ENCODE measurements at regions of chr2 and their contacts with region 1.

Region 1: GRCh38 chr2:105671156-105671555 is 73.6 kb upstream of the NCK2 start:
- DNase-seq: no peak
- H3K4me3 ChIP-seq: no peak overlapping the region
- H3K27ac ChIP-seq: no peak overlapping the region
- H3K4me1 ChIP-seq: no peaks in the 10 kb centered on the region
- H3K27me3 ChIP-seq: no peaks in the 10 kb centered on the region
- CTCF ChIP-seq: no peak
- EP300 ChIP-seq: no peak
- POLR2A ChIP-seq: no peak

Region 2: DNA sequence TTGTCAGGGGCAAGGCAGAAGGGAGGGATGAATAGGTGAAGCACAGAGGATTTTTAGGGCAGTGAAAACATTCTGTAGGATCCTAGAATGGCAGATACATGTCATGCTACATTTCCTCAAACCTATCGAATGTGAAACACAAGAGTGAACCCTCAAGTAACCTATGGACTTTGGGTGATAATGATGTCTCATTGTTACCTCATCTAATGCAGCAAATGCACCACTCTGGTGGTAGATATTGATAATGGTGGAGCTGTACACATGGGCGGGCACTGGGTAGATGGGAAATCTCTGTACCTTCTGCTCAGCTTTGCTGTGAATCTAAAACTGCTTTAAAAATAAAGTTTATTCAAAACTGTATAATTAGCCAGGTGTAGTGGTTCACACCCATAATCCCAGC is 21.6 kb before region 1 on chr2:
- in situ Hi-C with region 1: no loop called
- intact Hi-C with region 1: loop called (anchors 1 kb)
- DNase-seq: no peak
- H3K4me3 ChIP-seq: no peak overlapping the region
- H3K27ac ChIP-seq: no peak overlapping the region
- H3K4me1 ChIP-seq: peaks cover 0 to 11% (median 5%) of the 10 kb centered on the region in 4 donors
- H3K27me3 ChIP-seq: no peaks in the 10 kb centered on the region
- CTCF ChIP-seq: no peak
- EP300 ChIP-seq: no peak
- POLR2A ChIP-seq: no peak

Measured in transverse colon (tissue), 4 donors.